WTC11 (cell line): ENCODE measurements at regions of chrX and their contacts with region 1.

Region 1: GRCh38 chrX:22666441-22666840 is 333.3 kb upstream of the DDX53 start:
- DNase-seq: peak; percentile 46
- ATAC-seq: peak; percentile 72
- H3K4me3 Mint-ChIP-seq: no peak overlapping the region
- H3K27ac Mint-ChIP-seq: no peak overlapping the region
- H3K4me1 Mint-ChIP-seq: peaks cover 9% of the 10 kb centered on the region
- H3K27me3 Mint-ChIP-seq: no peaks in the 10 kb centered on the region
- CTCF ChIP-seq: no peak; the same call in 1 of the 2 replicates

Region 2: DNA sequence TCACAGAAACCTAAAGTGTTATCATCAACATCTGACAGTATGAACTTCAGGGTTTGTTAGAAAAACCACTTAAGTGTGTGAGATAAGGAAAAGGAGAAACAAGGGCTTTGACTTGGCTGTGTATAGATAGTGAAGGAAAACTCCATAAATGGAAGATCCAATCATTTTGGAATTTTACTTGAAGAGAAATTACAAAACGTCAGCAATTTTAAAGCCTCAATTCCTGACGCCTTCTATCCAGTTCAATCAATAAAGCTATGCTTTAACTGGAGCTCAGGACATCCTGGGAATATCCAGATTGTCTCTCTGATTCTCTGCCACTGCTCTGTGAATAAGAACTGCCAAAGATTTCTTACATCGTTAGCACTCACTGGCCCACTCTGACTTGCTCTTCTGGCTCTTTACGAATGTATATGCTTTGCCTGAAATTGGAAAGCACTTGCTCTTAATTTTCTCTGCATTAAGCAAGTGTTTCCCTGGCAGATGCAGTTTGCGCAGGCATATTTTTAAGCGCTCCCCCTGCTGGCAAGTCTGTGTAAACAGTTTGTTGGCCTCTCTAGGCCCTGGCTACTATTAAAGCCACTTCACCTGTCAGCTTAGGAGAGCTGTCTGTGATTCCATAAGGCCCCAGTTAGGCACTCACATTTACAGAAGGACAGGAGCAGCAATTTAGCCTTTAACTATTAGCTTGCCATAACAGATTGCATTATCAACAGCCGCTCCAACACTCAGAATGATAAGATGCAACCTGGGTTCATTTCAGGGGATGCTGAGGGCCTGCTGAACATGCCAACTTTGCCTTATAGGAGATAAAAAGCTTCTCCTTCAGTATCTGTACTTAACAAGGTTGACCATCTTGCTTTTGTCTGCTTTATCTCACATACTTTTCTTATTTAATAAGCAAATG is 81.9 kb after region 1 on chrX:
- CTCF ChIA-PET with region 1: interaction called, 10 read pairs
- POLR2A ChIA-PET with region 1: no interaction called
- DNase-seq: peak; percentile 50
- ATAC-seq: peak; percentile 75
- H3K4me3 Mint-ChIP-seq: no peak overlapping the region
- H3K27ac Mint-ChIP-seq: no peak overlapping the region
- H3K4me1 Mint-ChIP-seq: no peaks in the 10 kb centered on the region
- H3K27me3 Mint-ChIP-seq: no peaks in the 10 kb centered on the region
- CTCF ChIP-seq: peak; percentile 41; the same call in 1 of the 2 replicates

Region 3: DNA sequence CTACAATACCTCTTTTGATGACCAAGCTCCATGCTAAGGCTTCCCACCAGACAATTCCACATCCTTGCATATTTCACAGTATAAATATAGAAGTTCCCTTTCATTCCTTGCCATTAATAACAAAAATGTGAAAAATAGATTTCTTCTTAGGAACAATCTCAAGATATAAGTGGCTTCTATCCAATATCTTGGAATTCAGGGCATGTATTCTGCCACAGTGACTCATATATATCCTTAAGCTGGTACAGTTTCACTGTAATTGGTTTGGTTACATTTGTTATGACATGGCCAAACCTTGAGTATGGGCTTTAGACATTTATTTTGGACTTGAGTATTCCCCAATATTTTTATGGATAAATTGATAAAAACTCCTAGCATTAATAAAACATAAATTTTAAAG is 151.6 kb after region 1 on chrX:
- CTCF ChIA-PET with region 1: no interaction called
- POLR2A ChIA-PET with region 1: no interaction called
- DNase-seq: no peak
- ATAC-seq: no peak
- H3K4me3 Mint-ChIP-seq: no peak overlapping the region
- H3K27ac Mint-ChIP-seq: no peak overlapping the region
- H3K4me1 Mint-ChIP-seq: no peaks in the 10 kb centered on the region
- H3K27me3 Mint-ChIP-seq: no peaks in the 10 kb centered on the region
- CTCF ChIP-seq: no peak